ENCODE measurements at regions of chr6 and their contacts with region 1.

Region 1: DNA sequence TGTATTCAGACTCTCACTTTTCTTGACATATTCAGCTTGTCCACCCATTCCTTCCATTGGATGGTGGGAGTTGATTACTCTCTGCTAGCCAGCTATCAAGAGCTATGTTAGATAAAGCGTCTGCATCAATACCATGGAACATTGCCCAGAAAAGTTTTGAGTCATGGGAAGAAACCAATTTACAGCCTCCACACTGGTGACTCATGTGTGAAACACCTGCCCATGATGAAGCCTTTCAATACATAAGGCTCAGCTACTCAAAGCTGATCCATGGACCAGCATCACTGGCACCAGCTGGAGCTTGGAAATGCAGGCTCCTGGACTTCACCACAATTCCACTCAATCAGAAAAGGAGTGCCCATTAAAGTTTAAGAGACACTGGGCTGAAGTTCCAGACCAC is 16.1 kb downstream of the PLA2G7 start:
- DNase-seq: peak; percentile 97
- H3K4me3 ChIP-seq: no peak overlapping the region
- H3K27ac ChIP-seq: peak overlapping the region; percentile 4
- H3K4me1 ChIP-seq: peaks cover 24% of the 10 kb centered on the region
- H3K27me3 ChIP-seq: no peaks in the 10 kb centered on the region
- CTCF ChIP-seq: no peak

Region 2: DNA sequence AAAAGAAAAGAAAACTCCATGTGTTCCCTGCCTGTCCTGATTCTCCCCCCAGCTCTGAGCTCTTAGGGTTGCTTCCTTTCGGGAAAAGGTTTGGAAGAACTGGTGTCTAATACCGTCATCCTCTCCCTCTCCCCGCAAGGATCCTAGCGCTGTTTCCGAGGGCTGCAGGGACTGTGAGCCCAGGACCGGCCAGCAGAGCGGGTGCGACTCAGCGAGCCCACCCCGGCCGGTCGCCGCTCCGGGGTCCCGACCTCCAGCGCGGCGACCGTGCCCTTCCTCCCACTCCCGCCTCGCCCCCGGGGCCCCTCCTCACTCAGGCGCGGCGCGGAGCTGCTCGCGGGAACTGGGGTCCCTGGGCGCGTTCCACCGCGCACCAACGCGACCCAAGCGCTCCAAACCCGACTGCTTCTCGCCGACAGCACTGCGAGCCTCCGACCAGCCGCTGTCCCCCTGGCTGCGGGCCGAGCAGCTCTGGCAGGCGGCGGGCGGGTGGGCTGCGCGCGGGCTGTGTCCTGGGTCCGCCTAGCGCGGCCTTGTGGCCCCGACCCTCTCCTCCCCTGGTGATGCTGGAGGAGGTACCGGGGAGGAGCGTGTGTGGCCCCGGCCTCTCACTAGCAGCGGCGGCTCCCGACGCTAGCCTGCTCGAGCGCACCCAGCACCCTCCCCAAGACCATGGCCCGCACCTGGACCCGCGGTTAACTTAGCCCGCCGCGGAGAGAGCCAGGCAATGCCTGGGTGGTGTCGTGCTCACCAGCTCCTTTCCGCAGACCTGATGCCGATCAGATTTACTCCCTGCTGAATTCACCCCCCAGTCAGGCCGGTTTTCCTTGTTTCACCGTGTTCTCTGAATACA is 16.0 kb after region 1 on chr6 and contains the start of gene PLA2G7:
- CTCF ChIA-PET with region 1: interaction called, 7 read pairs
- dilution Hi-C with region 1: no loop called
- in situ Hi-C with region 1: no loop called
- intact Hi-C with region 1: loop called (anchors 1 kb)
- DNase-seq: peak; percentile 57
- H3K4me3 ChIP-seq: peak within 1 kb of the TSS; percentile 57 to 66 (median 57)
- H3K27ac ChIP-seq: peak within 1 kb of the TSS; percentile 55
- H3K4me1 ChIP-seq: peaks cover 42% of the 10 kb centered on the region
- H3K27me3 ChIP-seq: no peaks in the 10 kb centered on the region
- CTCF ChIP-seq: peak in 1 of 2 donors; percentile 1
- total RNA-seq, gene PLA2G7: 5.7 to 5.9 TPM

Measured in mammary epithelial cell (primary cell).